ENCODE measurements at regions of chr2 and their contacts with region 1.

Region 1: GRCh38 chr2:72887754-72888437 is 688 bp downstream of the SPR start:
- DNase-seq: peak; percentile 63
- H3K4me3 Mint-ChIP-seq: peak overlapping the region; percentile 66
- H3K27ac Mint-ChIP-seq: no peak overlapping the region
- H3K4me1 Mint-ChIP-seq: peaks cover 8% of the 10 kb centered on the region
- H3K27me3 Mint-ChIP-seq: peaks cover 81% of the 10 kb centered on the region

Region 2: DNA sequence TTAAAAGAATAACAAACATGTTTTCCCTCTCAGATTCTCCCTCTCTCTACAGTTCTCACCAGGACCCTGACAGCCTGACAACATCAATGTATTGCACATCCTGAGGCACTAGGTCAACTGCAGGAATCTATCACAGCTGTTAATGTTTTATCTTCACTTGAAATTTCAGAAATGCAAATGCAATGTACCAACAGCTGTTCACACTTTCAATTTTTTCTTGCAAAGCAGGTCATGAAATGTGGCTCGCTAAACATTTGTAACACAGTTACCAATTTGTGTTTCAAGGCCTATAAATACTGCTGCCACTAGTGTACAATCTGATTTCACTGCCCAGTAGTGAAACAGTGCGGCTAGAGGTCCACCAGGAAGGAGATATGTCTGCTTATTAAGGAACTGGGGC is 209.9 kb before region 1 on chr2:
- CTCF ChIA-PET with region 1: no interaction called
- DNase-seq: no peak
- H3K4me3 Mint-ChIP-seq: no peak overlapping the region
- H3K27ac Mint-ChIP-seq: no peak overlapping the region
- H3K4me1 Mint-ChIP-seq: no peaks in the 10 kb centered on the region
- H3K27me3 Mint-ChIP-seq: no peaks in the 10 kb centered on the region

Region 3: DNA sequence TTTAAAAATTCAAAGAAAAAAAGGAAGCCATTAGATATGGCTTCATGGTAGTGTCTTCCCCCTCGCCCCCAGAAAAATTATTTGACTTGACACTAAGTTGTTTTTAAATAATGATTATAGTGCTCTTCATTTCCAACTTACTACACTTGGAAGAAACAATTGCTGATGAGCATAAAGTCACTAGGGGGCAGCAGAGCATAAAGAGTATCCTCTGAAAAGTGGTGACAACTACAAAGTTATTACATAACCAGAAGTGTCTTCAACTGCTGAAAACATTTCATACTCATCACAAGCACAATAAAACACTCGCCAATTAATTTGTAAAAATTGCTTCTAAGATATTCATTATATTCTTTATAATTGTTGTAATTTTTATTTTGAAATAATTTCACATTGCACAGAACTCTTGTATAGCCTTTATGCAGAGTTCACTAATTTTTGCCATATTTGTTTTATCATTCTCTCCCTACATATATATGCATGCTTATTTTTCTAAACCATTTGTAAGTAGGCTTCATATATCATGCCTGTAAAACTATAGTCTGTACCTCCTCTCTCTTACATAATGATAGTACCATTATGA is 116.9 kb before region 1 on chr2:
- CTCF ChIA-PET with region 1: interaction called, 11 read pairs
- DNase-seq: peak; percentile 71
- H3K4me3 Mint-ChIP-seq: no peak overlapping the region
- H3K27ac Mint-ChIP-seq: no peak overlapping the region
- H3K4me1 Mint-ChIP-seq: no peaks in the 10 kb centered on the region
- H3K27me3 Mint-ChIP-seq: no peaks in the 10 kb centered on the region

Region 4: DNA sequence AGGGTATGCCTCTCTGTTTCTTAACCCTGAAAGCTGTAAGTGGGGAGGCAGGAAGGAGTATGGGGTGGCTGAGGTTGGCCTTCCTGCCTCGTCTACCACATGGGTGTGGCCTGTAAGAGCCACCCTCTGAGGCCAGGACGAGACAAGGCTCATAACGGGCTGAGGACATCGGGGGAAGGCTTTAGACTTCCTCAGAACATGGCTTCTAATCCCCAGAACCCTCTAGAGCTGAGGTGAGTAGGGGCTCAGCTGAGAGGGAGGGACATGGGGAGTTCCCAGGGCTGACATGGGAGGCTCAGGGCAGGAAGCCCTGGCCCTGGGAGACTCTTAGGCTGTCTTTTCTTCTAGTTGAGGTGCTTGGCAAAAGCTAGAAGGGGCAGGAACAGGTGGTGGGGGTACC is 66.1 kb after region 1 on chr2:
- CTCF ChIA-PET with region 1: interaction called, 20 read pairs
- DNase-seq: peak; percentile 74
- H3K4me3 Mint-ChIP-seq: peak overlapping the region; percentile 81
- H3K27ac Mint-ChIP-seq: peak overlapping the region; percentile 95
- H3K4me1 Mint-ChIP-seq: peaks cover 37% of the 10 kb centered on the region
- H3K27me3 Mint-ChIP-seq: peaks cover 6% of the 10 kb centered on the region

Region 5: DNA sequence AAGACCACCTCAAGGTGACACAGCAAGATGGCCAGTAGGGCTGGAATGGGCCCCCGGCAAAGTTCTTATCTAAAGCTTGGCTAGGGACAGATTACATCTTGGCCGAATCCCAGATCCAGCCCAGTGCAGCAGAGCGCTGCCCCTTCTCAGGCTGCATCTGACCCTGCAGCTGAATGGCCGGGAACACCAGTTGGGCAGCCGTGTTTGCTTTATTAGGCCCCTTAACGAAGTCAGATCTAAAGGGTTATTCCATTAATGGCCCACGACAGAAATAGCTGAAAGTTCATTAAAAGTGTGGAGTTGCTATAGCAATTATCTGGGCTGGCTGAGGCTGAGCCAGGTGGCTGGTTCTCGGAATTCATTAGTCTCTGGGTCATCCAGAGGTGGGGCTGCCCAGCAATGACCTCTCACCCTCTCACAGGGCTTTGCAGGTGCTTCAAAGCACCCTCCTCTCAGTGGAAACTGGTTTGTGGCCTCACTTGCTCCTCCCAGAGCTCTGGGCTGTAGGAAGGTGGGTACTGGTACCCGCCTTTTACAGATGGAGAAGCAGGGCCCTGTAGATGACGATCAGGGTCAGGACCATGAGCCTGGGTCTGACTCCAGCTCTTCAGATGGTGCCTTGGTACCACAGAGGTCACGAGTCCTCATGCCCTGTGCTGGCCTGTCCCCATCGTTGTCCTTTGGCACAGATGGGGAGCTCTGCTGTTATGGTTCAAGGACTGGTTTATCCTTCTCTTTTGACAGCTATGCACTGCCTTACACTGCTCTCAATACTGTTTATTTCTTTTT is 98.2 kb after region 1 on chr2:
- CTCF ChIA-PET with region 1: interaction called, 14 read pairs
- DNase-seq: no peak
- H3K4me3 Mint-ChIP-seq: no peak overlapping the region
- H3K27ac Mint-ChIP-seq: no peak overlapping the region
- H3K4me1 Mint-ChIP-seq: no peaks in the 10 kb centered on the region
- H3K27me3 Mint-ChIP-seq: no peaks in the 10 kb centered on the region

Region 6: DNA sequence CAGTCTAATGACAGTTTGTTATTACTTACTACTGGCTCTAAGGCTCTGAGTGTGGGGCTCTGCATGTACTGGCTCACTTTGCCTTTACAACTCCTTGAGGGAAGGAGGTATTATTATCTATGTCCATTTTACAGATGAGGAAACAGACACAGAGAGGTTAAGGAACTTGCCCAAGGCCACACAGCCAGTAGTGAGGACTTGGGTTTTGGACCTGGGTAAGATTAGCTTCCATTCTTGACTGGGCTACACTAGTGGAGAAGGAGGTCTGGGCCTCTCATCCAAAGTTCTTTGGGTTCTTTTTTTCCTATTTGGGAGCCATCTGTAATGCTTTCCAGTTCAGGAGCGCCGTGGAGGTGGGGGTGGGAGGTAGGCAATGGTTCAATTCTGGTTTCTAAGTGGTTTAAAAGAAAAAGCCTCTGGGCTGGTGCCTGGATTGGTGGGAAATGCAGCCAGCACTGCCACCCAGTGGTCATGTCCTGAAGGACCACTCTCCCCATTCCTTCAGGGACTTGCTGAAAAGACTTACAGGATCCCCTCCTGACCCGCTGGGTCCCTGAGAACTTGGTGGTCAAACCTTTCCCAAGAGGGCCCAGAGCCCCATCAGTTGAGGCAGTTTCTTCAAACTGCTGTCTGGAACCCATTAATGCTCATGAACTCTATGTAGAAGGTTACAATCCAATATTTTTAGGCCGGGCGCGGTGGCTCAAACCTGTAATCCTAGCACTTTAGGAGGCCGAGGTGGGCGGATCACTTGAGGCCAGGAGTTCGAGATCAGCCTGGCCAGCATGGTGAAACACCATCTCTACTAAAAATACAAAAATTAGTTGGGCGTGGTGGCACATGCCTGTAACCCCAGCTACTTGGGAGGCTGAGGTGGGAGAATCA is 275.8 kb after region 1 on chr2:
- CTCF ChIA-PET with region 1: interaction called, 15 read pairs
- DNase-seq: peak; percentile 72
- H3K4me3 Mint-ChIP-seq: no peak overlapping the region
- H3K27ac Mint-ChIP-seq: no peak overlapping the region
- H3K4me1 Mint-ChIP-seq: no peaks in the 10 kb centered on the region
- H3K27me3 Mint-ChIP-seq: peaks cover 14% of the 10 kb centered on the region

Region 7: GRCh38 chr2:73212448-73213176 is 324.7 kb after region 1 on chr2:
- CTCF ChIA-PET with region 1: interaction called, 26 read pairs
- DNase-seq: peak; percentile 79
- H3K4me3 Mint-ChIP-seq: no peak overlapping the region
- H3K27ac Mint-ChIP-seq: no peak overlapping the region
- H3K4me1 Mint-ChIP-seq: peaks cover 32% of the 10 kb centered on the region
- H3K27me3 Mint-ChIP-seq: peaks cover 20% of the 10 kb centered on the region

Measured in activated naive CD4-positive, alpha-beta T cell treated with anti-CD3 and anti-CD28 coated beads, Interleukin-2, amount 10 ng/mL, durations not matched to agents 7 days and 5 days (primary cell).